IMR-90 (cell line): ENCODE measurements at regions of chr4 and their contacts with region 1.

Region 1: GRCh38 chr4:152476796-152477195 is 59.1 kb downstream of the FBXW7 start:
- DNase-seq: no peak
- ATAC-seq: no peak
- H3K4me3 ChIP-seq: no peak overlapping the region
- H3K27ac ChIP-seq: no peak overlapping the region
- H3K4me1 ChIP-seq: no peaks in the 10 kb centered on the region; the same call in 1 of the 2 replicates
- H3K27me3 ChIP-seq: no peaks in the 10 kb centered on the region
- CTCF ChIP-seq: no peak
- POLR2A ChIP-seq: no peak
- RAD21 ChIP-seq: no peak

Region 2: DNA sequence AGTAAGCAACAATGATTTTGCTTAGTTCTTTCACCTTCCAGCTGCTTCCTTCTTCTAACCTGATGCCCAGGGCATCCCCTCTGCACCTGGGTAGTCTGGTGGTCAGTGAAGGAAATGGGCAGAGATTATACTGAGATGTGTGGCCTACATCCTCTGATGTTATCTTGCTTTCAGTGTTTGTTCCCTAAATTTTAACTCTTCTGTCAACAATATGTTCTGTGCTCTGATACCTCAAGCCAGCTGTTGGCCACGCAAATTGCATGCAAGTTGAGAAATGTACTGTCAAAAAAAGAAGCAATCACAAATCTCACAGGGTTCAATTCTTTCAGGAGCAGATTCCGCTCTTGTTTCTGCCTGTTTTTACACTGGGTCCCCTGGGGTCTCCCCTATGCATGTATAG is 14.7 kb before region 1 on chr4:
- CTCF ChIA-PET with region 1: interaction called, 3 read pairs
- POLR2A ChIA-PET with region 1: no interaction called
- dilution Hi-C with region 1: no loop called
- in situ Hi-C with region 1: no loop called
- intact Hi-C with region 1: loop called (anchors 2 kb)
- DNase-seq: no peak
- ATAC-seq: no peak
- H3K4me3 ChIP-seq: no peak overlapping the region
- H3K27ac ChIP-seq: no peak overlapping the region
- H3K4me1 ChIP-seq: peaks cover 6% of the 10 kb centered on the region
- H3K27me3 ChIP-seq: no peaks in the 10 kb centered on the region
- CTCF ChIP-seq: no peak
- POLR2A ChIP-seq: no peak
- RAD21 ChIP-seq: no peak